GM10248 (cell line): ENCODE measurements at regions of chr18 and their contacts with region 1.

Region 1: GRCh38 chr18:76922107-76922506 is 99.8 kb downstream of the ZNF236 start:
- DNase-seq: peak; percentile 80
- CTCF ChIP-seq: peak; percentile 80

Region 2: GRCh38 chr18:76905821-76906220 is 16.3 kb before region 1 on chr18:
- CTCF ChIA-PET with region 1: interaction called, 17 read pairs
- POLR2A ChIA-PET with region 1: no interaction called
- DNase-seq: no peak
- CTCF ChIP-seq: no peak

Region 3: DNA sequence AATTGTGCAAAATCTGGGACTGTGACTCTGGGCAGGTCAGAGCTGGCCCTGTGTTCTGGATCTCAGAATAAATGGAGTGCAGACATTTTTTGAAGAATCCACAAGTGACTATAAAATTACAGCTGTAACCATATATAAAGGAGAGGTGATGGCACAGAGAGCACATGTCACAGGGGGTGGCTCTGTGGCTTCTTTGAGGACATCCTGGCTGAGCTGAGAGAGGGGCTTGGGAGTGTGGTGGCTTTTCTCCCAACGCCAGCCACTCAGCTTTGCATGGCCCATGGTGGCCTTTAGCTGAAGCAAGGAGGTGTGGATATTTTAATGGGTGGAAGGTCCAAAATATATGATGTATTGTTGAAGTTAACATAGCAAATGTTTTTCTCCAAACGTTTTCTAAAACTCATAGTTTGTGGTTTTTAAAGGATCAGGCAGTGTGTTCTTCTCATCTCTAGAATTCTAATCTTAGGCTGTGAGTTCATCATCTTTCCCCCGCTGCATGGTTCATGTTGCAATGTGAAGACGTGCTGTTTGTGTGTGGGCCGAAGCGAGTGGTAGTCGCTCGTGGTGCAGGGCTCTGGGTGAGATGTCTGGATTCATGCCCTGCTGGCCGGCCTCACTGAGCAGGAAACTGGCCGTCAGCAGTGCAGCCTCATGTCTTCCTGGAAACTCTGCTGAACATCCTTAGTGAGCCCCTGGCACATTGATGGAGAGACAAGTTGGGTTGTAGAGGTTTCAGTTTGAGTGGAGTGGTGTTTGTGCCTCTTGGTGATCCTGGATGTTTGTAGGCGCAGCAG is 10.1 kb after region 1 on chr18:
- CTCF ChIA-PET with region 1: interaction called, 23 read pairs
- POLR2A ChIA-PET with region 1: no interaction called
- DNase-seq: no peak
- CTCF ChIP-seq: no peak

Region 4: GRCh38 chr18:76937597-76937996 is 15.5 kb after region 1 on chr18:
- CTCF ChIA-PET with region 1: interaction called, 23 read pairs
- POLR2A ChIA-PET with region 1: no interaction called
- DNase-seq: no peak
- CTCF ChIP-seq: no peak

Region 5: GRCh38 chr18:76977108-76977621 is 55.1 kb after region 1 on chr18:
- CTCF ChIA-PET with region 1: interaction called, 190 read pairs
- POLR2A ChIA-PET with region 1: no interaction called
- DNase-seq: no peak
- CTCF ChIP-seq: no peak

Region 6: DNA sequence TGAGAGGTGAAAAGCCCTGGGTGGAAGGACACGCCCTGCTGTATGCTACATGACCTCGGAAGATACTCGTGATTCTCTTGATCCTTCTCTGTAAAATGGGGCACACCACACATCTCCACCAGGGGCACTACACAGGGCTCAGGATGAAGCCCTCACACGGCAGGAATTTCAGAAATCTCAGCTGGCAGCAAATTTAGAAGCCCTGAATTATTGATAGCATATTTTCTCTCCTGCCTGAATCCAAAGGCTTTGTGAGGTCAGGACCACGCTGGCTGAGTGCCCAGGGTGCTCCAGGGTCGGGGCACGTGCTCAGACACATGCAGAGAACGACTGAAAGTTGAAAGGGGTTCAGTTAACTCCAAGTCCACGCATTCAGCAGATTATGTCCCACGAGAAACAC is 285.4 kb after region 1 on chr18:
- CTCF ChIA-PET with region 1: interaction called, 15 read pairs
- POLR2A ChIA-PET with region 1: no interaction called
- DNase-seq: no peak
- CTCF ChIP-seq: peak; percentile 34